Ascending aorta (tissue), 2 donors: ENCODE measurements at regions of chr12 and their contacts with region 1.

Region 1: GRCh38 chr12:27779920-27780611 is at the starts of genes KLHL42 and MANSC4:
- DNase-seq: peak in 1 of 2 donors; percentile 87
- H3K4me3 ChIP-seq: peak within 1 kb of the TSS; percentile 89 to 91
- H3K27ac ChIP-seq: peak within 1 kb of the TSS; percentile 92 to 94
- H3K4me1 ChIP-seq: peaks cover 0 to 11% of the 10 kb centered on the region in 2 donors
- H3K27me3 ChIP-seq: no peaks in the 10 kb centered on the region
- CTCF ChIP-seq: peak in 1 of 3 experiments; percentile 12
- total RNA-seq, gene KLHL42: 36.7 TPM
- total RNA-seq, gene MANSC4: not detected

Region 2: DNA sequence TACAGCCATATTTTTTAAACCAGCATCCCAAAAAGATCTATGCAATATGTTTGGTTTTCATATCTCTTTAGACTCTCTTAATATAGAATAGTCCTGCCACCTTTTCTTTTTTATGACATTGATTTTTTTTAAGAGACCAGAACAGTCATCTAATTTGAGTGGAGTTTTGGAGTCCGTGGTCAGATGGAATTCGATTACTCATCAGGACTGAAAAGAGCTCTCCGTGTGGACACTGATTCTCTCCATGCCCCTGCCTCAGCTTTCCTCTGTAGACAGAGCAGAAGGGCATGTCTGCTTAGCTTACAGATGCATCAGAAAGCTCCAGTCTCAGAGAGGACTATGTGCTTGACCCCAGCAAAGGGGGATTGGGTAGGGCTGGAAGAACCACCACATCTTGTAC is 305.7 kb before region 1 on chr12:
- intact Hi-C with region 1: no loop called
- DNase-seq: no peak
- H3K4me3 ChIP-seq: no peak overlapping the region
- H3K27ac ChIP-seq: no peak overlapping the region
- H3K4me1 ChIP-seq: peaks cover 0 to 5% of the 10 kb centered on the region in 2 donors
- H3K27me3 ChIP-seq: no peaks in the 10 kb centered on the region
- CTCF ChIP-seq: no peak

Region 3: DNA sequence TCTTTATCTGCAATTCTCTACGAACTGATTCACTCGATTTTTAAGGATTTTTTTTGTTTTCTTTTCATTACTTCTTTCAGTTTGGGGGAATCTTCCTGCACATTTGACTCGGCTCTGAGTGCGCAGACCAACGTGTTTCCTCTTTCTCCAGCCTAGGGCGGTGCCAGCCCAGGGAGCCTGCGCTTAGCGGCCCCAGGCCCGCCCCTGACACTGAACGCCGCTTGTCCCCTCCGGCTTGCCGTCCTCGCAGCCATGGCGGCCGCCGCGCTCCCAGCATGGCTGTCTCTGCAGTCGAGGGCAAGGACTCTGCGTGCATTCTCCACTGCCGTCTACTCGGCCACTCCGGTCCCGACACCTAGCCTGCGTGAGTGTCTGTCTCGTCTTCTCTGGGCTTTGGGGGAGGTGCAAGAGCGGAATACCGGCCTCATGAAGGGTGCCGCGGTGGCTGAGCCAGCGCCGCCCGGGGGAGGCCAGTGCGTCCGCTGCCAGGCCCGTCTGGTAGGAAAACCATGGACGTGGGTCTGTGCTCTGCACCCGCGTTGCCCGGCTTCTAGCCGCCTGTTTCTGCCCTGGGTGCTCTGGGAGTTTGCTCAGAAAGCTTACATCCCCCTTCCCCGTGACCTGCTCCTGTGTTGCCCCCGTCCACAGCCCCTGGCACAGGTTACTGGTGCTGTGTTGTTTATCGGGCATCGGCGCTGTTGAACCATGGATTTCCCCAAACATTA is 69.3 kb before region 1 on chr12 and contains the start of gene MRPS35:
- intact Hi-C with region 1: loop called (anchors 2 kb)
- DNase-seq: peak; percentile 62 to 95
- H3K4me3 ChIP-seq: peak within 1 kb of the TSS; percentile 81 to 91
- H3K27ac ChIP-seq: peak within 1 kb of the TSS; percentile 80 to 85
- H3K4me1 ChIP-seq: peaks cover 0 to 15% of the 10 kb centered on the region in 2 donors
- H3K27me3 ChIP-seq: no peaks in the 10 kb centered on the region
- CTCF ChIP-seq: no peak
- total RNA-seq, gene MRPS35: 2.7 TPM

Region 4: GRCh38 chr12:27751386-27752047 is 28.5 kb before region 1 on chr12:
- intact Hi-C with region 1: loop called (anchors 1 kb)
- DNase-seq: no peak
- H3K4me3 ChIP-seq: no peak overlapping the region
- H3K27ac ChIP-seq: no peak overlapping the region
- H3K4me1 ChIP-seq: peaks cover 4 to 19% of the 10 kb centered on the region in 2 donors
- H3K27me3 ChIP-seq: no peaks in the 10 kb centered on the region
- CTCF ChIP-seq: no peak

Region 5: DNA sequence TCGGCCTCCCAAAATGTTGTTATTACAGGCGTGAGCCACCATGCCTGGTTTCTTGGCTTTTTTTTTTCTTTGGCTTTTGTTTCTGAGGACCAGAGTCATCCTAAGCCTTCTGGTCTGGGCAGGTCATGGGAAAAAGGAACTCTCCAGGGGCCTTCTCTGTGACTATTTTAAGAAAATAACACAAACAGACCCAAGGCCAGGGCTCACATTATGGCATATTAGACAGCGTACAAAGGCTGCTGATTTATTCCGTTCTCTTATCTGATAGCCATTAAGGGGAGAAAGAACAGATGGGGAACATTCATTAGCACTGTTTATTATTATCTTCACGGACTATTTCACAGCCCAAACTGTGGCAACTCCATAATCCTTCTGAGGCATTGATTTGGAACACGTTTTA is 28.8 kb after region 1 on chr12:
- intact Hi-C with region 1: loop called (anchors 2 kb)
- DNase-seq: peak in 1 of 2 donors; percentile 58
- H3K4me3 ChIP-seq: no peak overlapping the region
- H3K27ac ChIP-seq: peak overlapping the region; percentile 64 to 73
- H3K4me1 ChIP-seq: peaks cover 4 to 37% of the 10 kb centered on the region in 2 donors
- H3K27me3 ChIP-seq: no peaks in the 10 kb centered on the region
- CTCF ChIP-seq: no peak